Sigmoid colon (tissue), 7 donors: ENCODE measurements at regions of chr1 and their contacts with region 1.

Region 1: DNA sequence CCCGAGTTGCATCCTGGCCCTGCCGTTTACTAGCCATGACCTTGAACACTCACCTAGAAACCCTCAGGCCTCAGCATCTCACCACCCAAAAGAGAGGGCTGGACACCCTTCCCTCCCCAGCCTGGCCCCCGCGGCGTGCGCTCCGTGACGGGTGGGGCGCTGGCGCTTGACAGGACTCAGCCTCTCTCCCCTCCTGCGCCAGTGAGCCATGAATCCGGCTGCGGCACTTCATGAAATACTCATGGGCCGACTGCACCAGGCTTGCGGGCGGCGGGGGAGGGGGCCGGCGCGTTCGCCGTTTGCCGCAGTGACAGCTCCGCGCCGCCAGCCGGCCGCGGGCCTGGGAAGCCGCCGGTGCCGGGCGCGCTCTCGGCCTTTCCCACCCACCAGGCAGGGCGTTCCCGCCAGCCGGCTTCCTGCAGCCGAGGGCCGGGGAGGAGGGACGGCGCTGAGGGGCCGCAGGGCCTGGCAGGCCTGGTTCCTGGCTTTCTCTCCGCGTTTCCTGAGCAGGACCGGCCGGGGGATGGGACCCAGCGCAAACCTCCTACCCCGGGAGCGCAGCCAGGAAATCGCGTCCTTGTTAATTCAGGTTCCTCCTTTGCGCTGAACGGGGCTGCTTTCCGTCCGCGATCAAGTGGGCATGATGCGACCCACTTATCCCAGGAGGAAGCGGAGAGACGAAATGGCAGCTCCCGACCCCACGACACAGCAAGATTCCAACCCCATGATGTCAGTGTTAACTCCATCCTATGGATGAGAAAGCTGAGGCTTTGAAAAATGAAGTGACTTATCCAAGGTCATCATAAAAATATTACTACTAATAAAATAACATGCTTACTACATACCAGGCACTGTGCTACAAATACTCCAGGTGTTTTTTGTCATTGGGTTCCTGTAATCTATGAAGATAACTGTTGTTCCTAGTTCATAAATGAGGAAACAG is 9.1 kb upstream of the LUZP1 start:
- DNase-seq: peak; percentile 91
- H3K4me3 ChIP-seq: peak overlapping the region; percentile 42 to 64 (median 56)
- H3K27ac ChIP-seq: peak overlapping the region; percentile 84 to 93 (median 90)
- H3K4me1 ChIP-seq: peaks cover 0 to 21% (median 17%) of the 10 kb centered on the region in 4 donors
- H3K27me3 ChIP-seq: no peaks in the 10 kb centered on the region
- CTCF ChIP-seq: peak in 2 of 4 experiments; percentile 17 to 40
- EP300 ChIP-seq: no peak
- POLR2A ChIP-seq: no peak

Region 2: DNA sequence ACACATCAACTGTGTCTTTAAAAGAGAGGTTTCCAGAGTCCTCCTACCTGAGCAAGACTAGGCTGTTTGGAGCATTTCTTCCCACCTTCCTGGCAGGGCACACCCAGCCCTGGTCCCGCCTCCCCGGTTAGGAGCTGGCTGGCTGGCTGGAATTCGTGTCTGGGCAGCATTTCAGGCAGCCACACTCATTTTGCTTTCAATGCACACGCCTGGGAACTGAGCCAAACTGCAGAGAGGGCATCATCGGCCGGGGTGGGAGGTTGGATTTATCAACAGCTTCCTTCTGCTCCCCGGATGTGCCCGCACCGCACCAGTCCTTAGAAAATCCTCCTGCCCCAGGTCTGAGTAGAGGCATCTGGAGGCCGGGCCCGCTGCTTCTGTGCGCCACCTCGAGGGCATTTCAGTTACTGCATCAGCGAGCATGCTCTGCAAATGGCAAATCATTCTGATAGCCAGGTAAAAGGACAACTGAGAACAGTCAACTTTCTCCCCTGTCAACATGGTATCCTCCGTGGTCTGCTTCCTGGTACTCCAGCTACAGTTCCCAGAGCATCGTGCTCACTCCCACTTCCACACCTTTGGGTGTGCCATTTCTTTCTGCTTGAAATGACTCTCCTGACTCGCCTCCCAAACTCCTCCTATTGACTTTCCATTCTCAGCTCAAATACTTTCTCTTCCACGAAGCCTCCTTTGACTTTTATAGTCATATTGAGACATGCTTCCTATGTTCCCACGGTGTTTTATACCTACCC is 226.2 kb after region 1 on chr1:
- intact Hi-C with region 1: loop called (anchors 10 kb)
- DNase-seq: peak; percentile 95
- H3K4me3 ChIP-seq: peak overlapping the region in 2 of 4 donors; percentile 18 to 21
- H3K27ac ChIP-seq: peak overlapping the region; percentile 59 to 74 (median 70)
- H3K4me1 ChIP-seq: peaks cover 0 to 26% (median 20%) of the 10 kb centered on the region in 4 donors
- H3K27me3 ChIP-seq: no peaks in the 10 kb centered on the region
- CTCF ChIP-seq: peak; percentile 80 to 96 (median 95)
- EP300 ChIP-seq: no peak
- POLR2A ChIP-seq: no peak

Region 3: DNA sequence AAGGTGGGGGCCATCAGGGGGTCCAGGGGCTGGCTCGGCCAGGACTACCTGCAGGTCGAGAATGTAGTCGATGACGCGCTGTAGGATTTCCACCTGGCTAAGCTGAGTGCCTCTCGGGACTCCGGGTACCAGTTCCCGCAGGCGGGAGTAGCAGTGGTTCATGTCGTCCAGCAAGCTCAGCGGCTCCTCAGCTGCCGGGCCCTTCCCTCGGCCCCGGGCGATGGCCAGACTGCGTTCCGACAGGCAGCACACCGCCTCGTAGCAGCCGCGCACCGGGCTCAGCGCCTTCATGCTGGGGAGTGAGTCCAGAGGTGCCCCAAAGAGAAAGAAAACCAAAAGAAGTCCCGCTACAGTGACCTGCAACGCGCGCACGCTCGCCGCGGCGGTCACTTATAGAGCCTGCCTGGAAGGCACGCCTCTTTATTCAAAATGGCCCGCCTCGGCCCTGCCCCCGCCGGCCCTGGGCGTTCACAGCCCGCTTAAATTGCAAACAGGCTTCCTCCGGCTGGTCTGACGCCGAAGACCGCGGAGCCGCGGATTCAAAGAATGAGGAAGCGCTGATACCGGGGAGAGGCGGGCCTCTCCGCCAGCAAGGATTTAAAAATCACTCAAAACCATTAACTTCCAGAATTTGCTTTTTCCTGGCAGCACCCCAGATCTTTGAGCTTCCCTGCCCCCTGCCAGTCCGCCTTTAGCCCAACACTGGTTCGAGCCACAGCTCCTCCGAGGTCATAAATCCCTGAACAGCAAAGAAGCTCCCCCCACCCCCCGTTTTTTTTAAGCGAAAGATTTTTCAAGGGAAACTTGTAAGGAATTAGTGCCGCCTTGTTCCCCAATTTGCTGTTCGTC is 381.7 kb after region 1 on chr1 and contains the start of gene ID3:
- intact Hi-C with region 1: loop called (anchors 5 kb)
- DNase-seq: peak; percentile 98
- H3K4me3 ChIP-seq: peak within 1 kb of the TSS; percentile 62 to 74 (median 68)
- H3K27ac ChIP-seq: peak within 1 kb of the TSS; percentile 89 to 96 (median 96)
- H3K4me1 ChIP-seq: peaks cover 0 to 84% (median 77%) of the 10 kb centered on the region in 4 donors
- H3K27me3 ChIP-seq: no peaks in the 10 kb centered on the region
- CTCF ChIP-seq: no peak
- EP300 ChIP-seq: peak in 1 of 4 donors; percentile 7
- POLR2A ChIP-seq: peak; percentile 82 to 99
- total RNA-seq, gene ID3: 72.1 to 144 (median 92.6) TPM